Heart left ventricle (tissue), 16 donors: ENCODE measurements at regions of chr2 and their contacts with region 1.

Region 1: DNA sequence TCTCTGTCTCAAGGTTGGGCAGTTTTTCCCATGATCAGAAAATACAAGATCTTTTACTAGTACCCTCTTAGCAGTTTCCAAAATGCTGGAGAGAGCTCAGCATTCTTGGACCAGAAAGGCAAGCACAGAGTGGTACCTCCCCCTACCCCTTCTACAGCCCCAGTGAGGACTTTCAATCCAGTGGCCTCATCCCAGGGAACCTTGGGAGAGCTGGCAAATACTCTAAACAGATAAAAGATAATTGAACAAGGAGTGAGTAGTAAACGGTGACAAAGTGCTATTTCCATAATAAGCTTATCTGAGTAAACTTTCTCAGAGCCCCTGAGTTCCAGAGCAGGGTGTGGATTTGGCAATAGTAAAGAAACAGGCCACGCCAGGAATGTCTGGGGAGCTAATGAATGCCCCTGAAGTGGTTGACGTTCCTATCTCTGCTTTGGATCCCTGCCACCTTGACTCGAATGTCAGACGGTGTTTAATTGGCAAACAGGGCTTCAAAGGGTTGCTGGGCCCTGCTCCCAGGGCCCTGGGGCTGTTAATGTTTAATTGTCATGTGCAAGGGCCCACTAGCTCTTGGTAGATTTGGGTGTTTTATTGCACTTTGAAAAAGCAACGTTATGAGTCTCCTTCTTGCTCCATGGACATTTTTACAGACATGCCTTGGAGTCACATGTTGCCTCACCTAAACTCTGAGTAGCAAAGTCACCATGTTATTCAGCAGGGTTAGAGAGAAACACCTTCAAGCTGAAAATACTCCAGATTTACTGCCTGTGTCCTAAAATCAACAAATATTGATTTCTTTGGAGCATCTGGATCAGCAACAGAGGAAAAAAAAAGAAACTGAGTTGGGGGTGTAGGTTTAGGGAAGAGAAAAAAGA is 239.9 kb downstream of the CYRIA start:
- DNase-seq: peak in 4 of 5 donors; percentile 60 to 75 (median 65)
- ATAC-seq: peak; percentile 91 to 97 (median 94)
- H3K4me3 ChIP-seq: no peak overlapping the region
- H3K27ac ChIP-seq: peak overlapping the region in 3 of 12 donors; percentile 24 to 46 (median 43)
- H3K4me1 ChIP-seq: peaks cover 0 to 10% (median 0%) of the 10 kb centered on the region in 12 donors
- H3K27me3 ChIP-seq: no peaks in the 10 kb centered on the region
- CTCF ChIP-seq: no peak
- POLR2A ChIP-seq: no peak

Region 2: DNA sequence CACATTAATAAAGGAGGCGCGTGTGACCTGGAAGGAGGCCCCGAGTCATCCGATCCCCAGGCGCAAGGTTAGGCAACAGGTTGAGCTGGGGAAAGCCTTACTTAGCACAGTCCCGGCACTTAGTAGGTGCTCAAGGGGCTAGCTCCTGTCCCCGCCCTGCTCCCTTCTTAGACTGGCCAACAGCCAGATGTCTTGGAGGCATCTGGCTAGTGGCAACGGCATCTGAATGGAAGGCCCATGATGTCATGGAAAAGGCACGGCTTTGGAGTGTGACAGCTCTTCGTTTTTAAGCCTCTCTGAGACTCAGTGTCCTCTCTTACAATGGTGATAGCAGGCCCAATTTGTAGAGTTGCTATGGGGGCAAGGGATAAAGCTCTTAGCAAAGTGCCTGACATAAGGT is 18.3 kb before region 1 on chr2:
- intact Hi-C with region 1: loop called in 1 of 10 experiments (anchors 1 kb)
- DNase-seq: peak in 4 of 5 donors; percentile 63 to 75 (median 72)
- ATAC-seq: peak; percentile 91 to 94 (median 92)
- H3K4me3 ChIP-seq: no peak overlapping the region
- H3K27ac ChIP-seq: peak overlapping the region in 8 of 12 donors; percentile 22 to 76 (median 66)
- H3K4me1 ChIP-seq: peaks cover 0 to 30% (median 5%) of the 10 kb centered on the region in 12 donors
- H3K27me3 ChIP-seq: peaks cover 0 to 4% (median 0%) of the 10 kb centered on the region in 9 donors
- CTCF ChIP-seq: no peak
- POLR2A ChIP-seq: no peak